Right ventricle myocardium inferior (tissue), 1 donor: ENCODE measurements at regions of chr18 and their contacts with region 1.

Region 1: GRCh38 chr18:35084494-35085449 is 43.6 kb downstream of the MAPRE2 start:
- DNase-seq: no peak
- ATAC-seq: no peak

Region 2: DNA sequence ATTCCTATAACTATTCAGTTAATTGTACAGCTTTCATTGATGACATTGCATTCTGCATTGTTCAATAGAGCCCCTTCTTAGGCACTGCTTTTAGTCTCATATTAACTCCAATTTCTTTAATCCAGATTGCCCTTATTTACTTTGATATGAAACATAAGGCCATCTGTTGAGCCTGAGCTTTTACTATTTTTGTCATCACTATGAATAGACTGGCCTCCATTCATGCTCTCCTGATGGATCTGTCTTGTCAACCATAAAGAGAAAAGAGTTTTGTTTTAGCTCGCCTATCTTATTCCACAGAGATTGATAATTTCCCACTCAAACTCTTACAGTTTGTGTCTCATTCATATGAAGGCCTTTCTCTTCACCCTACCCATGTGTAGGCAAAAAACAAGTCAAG is 533.9 kb before region 1 on chr18:
- intact Hi-C with region 1: no loop called
- DNase-seq: no peak
- ATAC-seq: peak; percentile 44

Region 3: DNA sequence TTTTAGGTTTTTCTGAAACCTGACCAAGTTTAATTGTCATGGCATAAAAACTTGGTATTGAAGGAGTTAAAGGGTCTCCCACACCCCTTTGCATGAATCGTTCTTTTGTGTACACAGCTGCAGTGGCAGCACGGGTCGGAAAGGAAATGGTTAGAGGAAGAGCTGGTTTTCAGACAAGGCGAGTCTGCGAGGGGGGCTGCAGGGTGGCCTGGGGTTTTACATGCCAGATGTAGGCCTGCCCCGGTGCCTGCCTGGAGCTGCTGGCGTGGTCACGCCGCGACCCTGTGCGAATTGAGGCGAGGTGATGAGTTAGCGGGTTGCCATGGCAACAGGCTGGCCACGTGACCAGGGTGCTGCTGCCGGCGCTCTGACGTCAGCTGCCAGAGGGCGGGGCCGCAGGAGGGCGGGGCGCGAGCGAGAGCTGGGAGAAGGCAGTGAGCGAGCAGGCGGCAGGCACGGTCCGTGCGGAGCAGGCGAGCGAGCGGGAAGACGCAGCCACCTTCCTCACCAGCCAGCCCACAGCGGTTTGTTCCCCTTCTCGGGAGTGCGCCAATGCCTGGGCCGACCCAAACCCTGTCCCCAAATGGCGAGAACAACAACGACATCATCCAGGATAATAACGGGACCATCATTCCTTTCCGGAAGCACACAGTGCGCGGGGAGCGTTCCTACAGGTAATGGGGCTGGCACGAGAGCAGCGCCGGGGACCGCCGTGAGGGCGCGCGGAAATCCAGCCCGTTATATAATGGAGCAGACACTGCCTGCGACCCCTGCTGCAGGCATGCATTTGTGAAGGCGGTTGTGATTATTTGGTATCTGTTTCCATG is 43.6 kb before region 1 on chr18 and contains the start of gene MAPRE2:
- intact Hi-C with region 1: loop called (anchors 5 kb)
- DNase-seq: peak; percentile 100
- ATAC-seq: peak; percentile 97
- total RNA-seq, gene MAPRE2: 112 TPM

Region 4: GRCh38 chr18:35050028-35050546 is 34.7 kb before region 1 on chr18:
- intact Hi-C with region 1: loop called (anchors 2 kb)
- DNase-seq: no peak
- ATAC-seq: peak; percentile 10